Activated CD4-positive, alpha-beta T cell treated with anti-CD3 and anti-CD28 coated beads, Interleukin-2, amount 10 ng/mL, durations not matched to agents 7 days and 5 days (primary cell): ENCODE measurements at regions of chr10 and their contacts with region 1.

Region 1: DNA sequence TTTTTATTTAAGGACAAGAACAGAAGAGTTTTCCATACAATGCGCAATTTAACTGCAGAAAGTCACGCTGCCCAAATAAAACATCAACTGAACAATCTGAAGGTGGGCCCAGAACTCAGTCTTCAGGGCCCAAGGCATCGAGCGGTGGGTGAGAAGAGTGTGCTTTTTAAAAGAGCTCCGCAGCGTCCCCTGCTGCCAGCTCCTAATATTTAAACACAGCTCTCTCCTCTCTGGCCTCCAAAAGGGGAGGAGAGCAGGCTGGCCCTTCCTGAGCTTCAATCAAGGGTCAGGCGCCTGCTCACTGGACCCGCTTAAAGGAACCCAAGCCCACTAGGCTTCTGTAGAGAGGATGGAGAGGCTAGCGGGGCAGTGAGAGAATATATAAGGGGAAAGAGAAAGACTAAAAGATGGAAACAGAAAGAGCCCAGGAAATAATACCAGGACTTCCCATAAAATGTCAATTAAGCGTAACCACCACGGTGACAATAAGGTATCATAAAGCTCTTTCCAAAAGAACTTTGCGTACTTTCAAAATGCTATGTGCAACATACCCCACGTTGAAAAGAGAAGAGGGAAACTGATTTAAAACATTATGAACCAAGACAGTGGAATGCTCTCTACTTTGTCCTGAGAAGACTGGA is 2.8 kb downstream of the FAM53B start:
- DNase-seq: peak; percentile 79
- H3K4me3 Mint-ChIP-seq: peak overlapping the region; percentile 98
- H3K27ac Mint-ChIP-seq: peak overlapping the region; percentile 81
- H3K4me1 Mint-ChIP-seq: peaks cover 75% of the 10 kb centered on the region
- H3K27me3 Mint-ChIP-seq: peaks cover 9% of the 10 kb centered on the region

Region 2: DNA sequence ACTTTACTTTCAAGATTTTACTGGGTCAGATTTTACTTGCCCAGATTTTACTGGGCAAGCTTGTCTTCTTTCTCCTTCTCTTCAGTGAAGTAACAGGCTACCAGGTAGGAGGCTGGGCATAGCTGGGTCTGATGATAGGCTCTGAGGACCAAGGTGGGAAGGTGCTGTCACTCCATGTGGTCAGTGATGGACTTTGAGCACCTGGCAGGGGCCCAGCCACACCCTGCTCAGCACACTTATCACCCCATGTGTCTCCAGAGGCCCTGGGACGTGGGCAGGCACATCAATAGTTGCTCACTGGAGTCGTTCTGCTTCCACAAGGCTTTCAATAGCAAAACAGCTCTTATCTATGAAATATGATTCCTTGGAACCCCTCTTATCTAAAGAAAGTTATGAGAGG is 1145.7 kb before region 1 on chr10:
- CTCF ChIA-PET with region 1: no interaction called
- POLR2A ChIA-PET with region 1: no interaction called
- DNase-seq: no peak
- H3K4me3 Mint-ChIP-seq: no peak overlapping the region
- H3K27ac Mint-ChIP-seq: no peak overlapping the region
- H3K4me1 Mint-ChIP-seq: no peaks in the 10 kb centered on the region
- H3K27me3 Mint-ChIP-seq: no peaks in the 10 kb centered on the region

Region 3: DNA sequence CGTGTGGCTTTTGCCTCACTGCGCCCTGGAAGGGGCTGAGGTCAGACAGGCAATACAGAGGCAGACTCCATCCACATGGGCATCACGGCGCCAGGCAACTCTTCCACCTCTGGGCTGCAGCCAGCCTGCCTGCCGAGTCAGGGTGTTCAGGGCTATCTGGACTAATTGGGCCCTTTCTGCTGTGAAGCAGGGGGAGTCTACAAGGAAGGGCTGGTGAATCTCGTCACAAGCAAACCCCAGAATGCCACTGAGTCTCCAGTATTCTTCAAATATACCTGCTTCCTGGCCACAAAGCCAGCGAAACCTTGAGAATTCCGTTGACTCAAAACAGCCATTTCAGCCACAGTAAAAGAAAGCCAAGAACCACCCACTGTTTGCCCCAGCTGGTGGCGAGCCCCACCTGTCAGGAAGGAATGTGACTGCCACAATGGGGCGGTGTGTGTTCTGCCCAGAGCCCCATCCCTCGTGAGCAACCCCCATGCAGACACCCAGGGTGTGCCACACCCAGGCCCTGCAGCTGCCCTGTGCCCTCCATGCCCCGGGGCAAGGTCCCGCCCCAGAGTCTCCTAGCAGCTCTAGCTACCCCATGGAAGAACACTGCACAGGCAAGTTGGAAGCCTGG is 114.5 kb before region 1 on chr10:
- CTCF ChIA-PET with region 1: interaction called, 10 read pairs
- POLR2A ChIA-PET with region 1: no interaction called
- DNase-seq: peak; percentile 67
- H3K4me3 Mint-ChIP-seq: peak overlapping the region; percentile 15
- H3K27ac Mint-ChIP-seq: peak overlapping the region; percentile 80
- H3K4me1 Mint-ChIP-seq: peaks cover 52% of the 10 kb centered on the region
- H3K27me3 Mint-ChIP-seq: no peaks in the 10 kb centered on the region

Region 4: DNA sequence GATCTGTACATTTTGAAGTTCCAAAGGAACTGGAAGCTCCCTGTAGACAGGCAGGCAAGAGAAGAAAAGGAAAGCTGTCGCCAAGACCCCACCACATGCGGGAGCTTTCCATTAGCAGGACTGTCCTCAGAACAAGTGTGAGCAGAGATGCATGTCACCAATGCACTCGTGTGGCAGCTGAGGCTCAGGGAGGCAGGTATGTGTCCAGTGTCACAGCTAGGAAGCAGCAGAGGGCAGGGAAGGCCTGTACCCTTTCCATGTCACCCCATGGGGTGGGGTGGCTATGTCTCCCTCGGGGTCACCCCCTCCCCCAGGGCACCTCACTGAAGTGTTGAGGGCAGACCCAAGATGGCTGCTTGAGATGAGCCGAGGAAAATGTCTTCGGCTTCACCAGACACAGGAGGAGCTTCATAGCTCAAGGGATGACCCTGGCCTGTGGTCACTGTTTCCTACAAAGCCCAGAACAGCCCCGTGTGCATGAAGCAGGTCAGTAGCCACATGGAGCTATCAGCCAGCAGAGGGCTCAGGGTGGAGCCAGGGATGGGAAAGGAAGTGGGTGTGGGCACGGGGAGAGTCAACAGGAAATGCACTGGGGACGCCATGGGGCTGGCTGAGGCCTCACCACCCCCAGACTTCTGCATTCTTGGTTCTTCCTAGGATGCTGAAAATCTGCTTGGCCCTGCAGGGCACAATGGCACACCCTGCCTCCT is 93.8 kb before region 1 on chr10:
- CTCF ChIA-PET with region 1: interaction called, 21 read pairs
- POLR2A ChIA-PET with region 1: no interaction called
- DNase-seq: peak; percentile 83
- H3K4me3 Mint-ChIP-seq: peak overlapping the region; percentile 71
- H3K27ac Mint-ChIP-seq: peak overlapping the region; percentile 98
- H3K4me1 Mint-ChIP-seq: peaks cover 77% of the 10 kb centered on the region
- H3K27me3 Mint-ChIP-seq: no peaks in the 10 kb centered on the region

Region 5: DNA sequence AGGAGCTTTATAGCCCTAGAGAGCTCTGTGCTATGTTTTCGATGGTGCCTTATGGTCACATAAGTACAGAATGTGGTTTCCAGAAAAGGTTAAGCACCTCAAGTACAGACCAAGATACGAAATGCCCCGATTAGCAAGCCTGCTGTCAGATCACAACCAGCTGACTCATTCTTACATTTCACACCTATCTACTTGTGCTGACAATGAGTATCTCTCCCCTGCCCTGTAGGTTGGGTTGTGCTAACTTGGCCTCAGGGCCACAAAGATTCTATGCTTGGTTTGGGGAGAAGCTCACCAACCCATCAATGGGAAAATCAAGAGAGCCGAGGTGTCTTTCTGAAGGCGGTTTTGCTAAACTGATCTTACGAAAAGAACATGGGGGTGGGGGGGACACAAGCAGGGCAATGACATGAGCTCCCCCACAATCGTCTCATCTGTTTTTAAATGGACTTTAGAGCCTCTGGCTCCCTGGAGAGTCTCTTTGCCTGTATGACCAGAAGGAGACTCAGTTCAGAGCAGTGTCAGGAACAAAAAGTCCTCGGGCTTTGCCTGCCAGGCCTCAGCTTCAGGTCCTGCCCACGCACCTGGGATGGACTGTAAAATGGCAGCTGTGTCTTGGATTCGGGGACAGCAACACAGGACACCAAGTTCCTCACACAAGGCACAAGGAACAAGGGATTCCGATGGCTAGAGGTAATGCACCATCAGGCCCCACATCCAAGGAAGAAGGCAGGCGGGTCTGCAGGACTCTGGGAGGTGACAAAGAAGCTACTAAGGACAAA is 52.3 kb before region 1 on chr10:
- CTCF ChIA-PET with region 1: interaction called, 19 read pairs
- POLR2A ChIA-PET with region 1: no interaction called
- DNase-seq: peak; percentile 55
- H3K4me3 Mint-ChIP-seq: no peak overlapping the region
- H3K27ac Mint-ChIP-seq: peak overlapping the region; percentile 83
- H3K4me1 Mint-ChIP-seq: peaks cover 62% of the 10 kb centered on the region
- H3K27me3 Mint-ChIP-seq: no peaks in the 10 kb centered on the region

Region 6: GRCh38 chr10:124697830-124698544 is 43.4 kb before region 1 on chr10:
- CTCF ChIA-PET with region 1: interaction called, 10 read pairs
- POLR2A ChIA-PET with region 1: no interaction called
- DNase-seq: peak; percentile 43
- H3K4me3 Mint-ChIP-seq: no peak overlapping the region
- H3K27ac Mint-ChIP-seq: peak overlapping the region; percentile 95
- H3K4me1 Mint-ChIP-seq: peaks cover 95% of the 10 kb centered on the region
- H3K27me3 Mint-ChIP-seq: no peaks in the 10 kb centered on the region

Region 7: DNA sequence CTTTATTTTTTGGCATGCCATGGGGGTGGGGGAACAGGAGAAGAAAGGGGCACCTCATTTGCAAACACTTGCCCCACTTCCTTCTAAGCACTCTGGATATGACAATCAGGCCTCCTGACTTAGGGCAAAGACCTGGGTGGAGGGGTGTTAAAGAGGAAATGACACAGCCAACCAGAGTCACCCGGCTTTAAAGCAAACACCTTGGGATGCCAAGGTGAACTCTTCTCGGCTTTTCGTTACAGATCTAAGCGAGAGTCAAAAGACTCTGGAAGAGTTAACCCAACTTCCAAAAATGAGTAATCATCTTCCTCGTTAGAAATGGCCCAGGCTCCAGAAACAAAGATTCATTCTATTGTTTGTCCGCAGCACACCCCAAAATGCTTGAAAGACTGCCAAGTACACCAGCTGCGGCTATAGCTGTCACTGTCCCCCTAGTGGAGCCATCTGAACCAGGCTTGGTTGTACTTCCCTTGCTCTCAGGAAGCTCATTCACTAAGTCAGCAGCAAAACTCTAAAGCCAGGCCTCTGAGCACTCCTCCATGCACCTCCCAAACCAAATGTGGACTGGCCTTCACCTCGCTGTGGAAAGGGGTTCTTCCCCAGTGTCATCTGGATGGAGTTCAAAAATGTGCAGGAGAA is 22.1 kb before region 1 on chr10:
- CTCF ChIA-PET with region 1: interaction called, 29 read pairs
- POLR2A ChIA-PET with region 1: interaction called, 3 read pairs
- DNase-seq: peak; percentile 80
- H3K4me3 Mint-ChIP-seq: peak overlapping the region; percentile 30
- H3K27ac Mint-ChIP-seq: peak overlapping the region; percentile 96
- H3K4me1 Mint-ChIP-seq: peaks cover 91% of the 10 kb centered on the region
- H3K27me3 Mint-ChIP-seq: no peaks in the 10 kb centered on the region

Region 8: GRCh38 chr10:124724279-124725027 is 16.9 kb before region 1 on chr10:
- CTCF ChIA-PET with region 1: interaction called, 29 read pairs
- POLR2A ChIA-PET with region 1: interaction called, 3 read pairs
- DNase-seq: no peak
- H3K4me3 Mint-ChIP-seq: no peak overlapping the region
- H3K27ac Mint-ChIP-seq: peak overlapping the region; percentile 86
- H3K4me1 Mint-ChIP-seq: peaks cover 84% of the 10 kb centered on the region
- H3K27me3 Mint-ChIP-seq: no peaks in the 10 kb centered on the region

Region 9: DNA sequence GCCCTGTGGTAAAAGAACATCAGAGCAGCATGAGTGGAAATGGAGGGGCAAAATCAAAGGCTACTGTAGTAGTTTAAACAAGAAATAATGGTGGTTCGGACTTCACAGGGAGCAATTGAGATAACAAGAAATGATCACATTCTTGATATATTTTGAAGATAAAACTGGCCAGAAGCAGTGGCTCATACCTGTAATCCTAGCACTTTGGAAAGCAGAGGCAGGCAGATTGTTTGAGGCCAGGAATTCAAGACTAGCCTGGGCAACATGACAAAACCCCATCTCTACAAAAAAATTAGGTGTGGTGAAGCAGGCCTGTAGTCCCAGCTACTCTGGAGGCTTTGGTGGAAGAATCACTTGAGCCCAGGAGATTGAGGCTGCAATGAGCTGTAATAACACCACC is 27.4 kb after region 1 on chr10:
- CTCF ChIA-PET with region 1: no interaction called
- POLR2A ChIA-PET with region 1: no interaction called
- DNase-seq: no peak
- H3K4me3 Mint-ChIP-seq: no peak overlapping the region
- H3K27ac Mint-ChIP-seq: no peak overlapping the region
- H3K4me1 Mint-ChIP-seq: no peaks in the 10 kb centered on the region
- H3K27me3 Mint-ChIP-seq: no peaks in the 10 kb centered on the region

Region 10: DNA sequence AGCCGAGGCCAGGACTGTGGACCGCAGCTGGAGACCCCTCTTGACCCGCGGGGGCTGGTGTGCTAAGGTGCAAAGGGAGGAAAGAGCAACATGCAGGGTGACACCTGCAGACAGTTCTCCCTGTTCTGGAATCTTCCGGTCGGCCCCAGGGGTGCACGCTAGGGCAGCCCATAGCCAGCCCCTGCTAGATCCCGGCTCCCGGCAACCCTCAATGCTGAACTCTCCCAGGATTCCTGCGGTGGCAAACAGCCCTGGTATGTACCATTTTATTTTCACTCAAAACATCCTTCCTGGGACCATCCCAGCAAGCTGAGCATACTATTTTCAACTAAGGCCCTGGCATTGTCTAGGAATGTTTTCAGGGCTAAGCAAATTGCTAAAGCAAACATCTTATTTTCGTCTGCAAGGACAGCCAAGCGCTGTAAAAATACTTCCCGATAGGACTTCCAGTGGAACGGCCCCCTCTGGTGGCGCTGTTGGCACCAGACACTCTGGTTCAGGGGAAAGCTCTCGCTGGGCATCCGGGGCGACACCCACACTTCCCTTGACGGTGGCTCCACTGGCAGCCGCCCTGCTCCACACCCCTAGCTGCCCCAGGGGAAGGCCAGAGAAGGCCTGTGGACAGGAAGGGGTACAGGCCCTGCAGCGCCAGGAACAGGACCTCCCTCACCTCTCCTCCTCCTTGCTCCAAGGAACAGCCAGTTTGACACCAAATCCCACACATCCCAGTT is 319.6 kb after region 1 on chr10:
- CTCF ChIA-PET with region 1: no interaction called
- POLR2A ChIA-PET with region 1: no interaction called
- DNase-seq: peak; percentile 44
- H3K4me3 Mint-ChIP-seq: no peak overlapping the region
- H3K27ac Mint-ChIP-seq: no peak overlapping the region
- H3K4me1 Mint-ChIP-seq: peaks cover 17% of the 10 kb centered on the region
- H3K27me3 Mint-ChIP-seq: peaks cover 16% of the 10 kb centered on the region